ENCODE measurements at regions of chr4 and their contacts with region 1.

Region 1: GRCh38 chr4:140359562-140360427 is 13.7 kb upstream of the SCOC start:
- DNase-seq: peak; percentile 89
- ATAC-seq: peak; percentile 94
- H3K4me3 Mint-ChIP-seq: no peak overlapping the region
- H3K27ac Mint-ChIP-seq: no peak overlapping the region
- H3K4me1 Mint-ChIP-seq: no peaks in the 10 kb centered on the region
- H3K27me3 Mint-ChIP-seq: peaks cover 8% of the 10 kb centered on the region
- CTCF ChIP-seq: peak; percentile 82

Region 2: DNA sequence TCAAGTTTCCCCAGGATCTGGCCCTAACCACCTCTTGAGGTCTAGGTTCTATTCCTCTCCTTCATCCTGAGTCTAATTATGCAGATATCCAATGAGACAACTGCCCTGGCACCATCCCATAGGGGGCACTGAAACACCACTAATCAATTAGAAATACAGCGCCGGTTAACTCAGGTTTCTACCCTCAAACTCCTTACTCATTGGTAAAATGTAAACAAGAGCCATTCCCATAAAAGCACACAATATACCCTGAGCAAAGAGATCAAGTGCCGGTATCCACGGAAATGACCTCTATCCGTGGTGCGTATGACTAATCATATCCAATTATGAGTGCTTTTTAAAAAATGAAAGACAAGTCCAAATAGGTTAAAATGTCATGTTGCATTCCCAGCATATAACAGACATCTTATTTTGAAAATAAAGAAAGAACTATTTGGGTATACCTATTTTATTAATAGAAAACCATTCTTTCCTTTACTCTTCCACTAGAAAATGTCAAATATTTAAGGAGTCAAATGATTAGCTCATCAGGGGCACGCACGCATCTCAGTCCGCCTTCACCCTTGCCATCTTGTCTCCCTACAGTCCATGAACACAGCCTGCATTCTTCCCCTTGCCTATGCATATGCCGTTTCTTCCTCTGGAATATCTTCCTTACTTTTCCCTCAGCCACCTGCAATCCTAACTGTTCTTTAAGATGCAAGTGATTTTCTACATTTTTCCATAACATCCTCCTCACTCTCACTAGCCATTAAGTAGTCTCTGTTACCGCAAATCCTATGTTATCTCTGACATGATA is 346.9 kb before region 1 on chr4:
- CTCF ChIA-PET with region 1: interaction called, 28 read pairs
- POLR2A ChIA-PET with region 1: no interaction called
- DNase-seq: peak; percentile 60
- ATAC-seq: peak; percentile 99
- H3K4me3 Mint-ChIP-seq: no peak overlapping the region
- H3K27ac Mint-ChIP-seq: peak overlapping the region; percentile 28
- H3K4me1 Mint-ChIP-seq: peaks cover 13% of the 10 kb centered on the region
- H3K27me3 Mint-ChIP-seq: no peaks in the 10 kb centered on the region
- CTCF ChIP-seq: no peak; the same call in 1 of the 2 replicates

Region 3: DNA sequence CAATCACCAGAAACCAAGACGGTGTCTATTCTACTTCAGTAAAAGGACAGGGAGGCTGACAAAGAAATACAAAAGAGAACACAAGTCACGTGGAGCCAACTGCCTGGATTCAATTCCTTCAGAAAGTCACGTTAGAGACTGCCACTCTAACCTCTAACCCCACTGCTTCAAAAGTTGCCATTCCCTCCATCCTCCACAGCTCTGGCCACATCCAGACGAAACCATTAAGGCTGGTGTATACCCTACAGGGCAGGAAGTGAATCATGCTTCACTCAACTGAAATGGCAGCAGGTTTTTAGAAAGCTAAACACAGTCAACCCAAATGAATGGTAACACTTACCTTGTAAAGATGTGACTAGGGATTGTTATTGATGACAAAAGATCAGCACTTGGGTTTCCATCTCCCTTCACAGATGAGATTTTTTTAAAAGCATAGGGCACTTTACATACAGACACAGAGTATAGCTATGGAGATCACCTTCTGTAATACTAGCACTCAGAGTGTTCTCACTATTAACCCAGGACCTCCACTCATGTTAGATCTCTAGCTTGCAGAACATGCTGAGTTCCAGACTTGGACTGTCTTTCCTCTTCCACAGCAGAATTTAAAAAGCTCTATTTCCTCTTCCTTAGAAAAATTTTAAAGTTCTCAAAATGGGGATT is 243.2 kb before region 1 on chr4:
- CTCF ChIA-PET with region 1: no interaction called
- POLR2A ChIA-PET with region 1: no interaction called
- DNase-seq: no peak
- ATAC-seq: peak; percentile 91
- H3K4me3 Mint-ChIP-seq: no peak overlapping the region
- H3K27ac Mint-ChIP-seq: no peak overlapping the region
- H3K4me1 Mint-ChIP-seq: peaks cover 14% of the 10 kb centered on the region
- H3K27me3 Mint-ChIP-seq: no peaks in the 10 kb centered on the region
- CTCF ChIP-seq: no peak

Region 4: DNA sequence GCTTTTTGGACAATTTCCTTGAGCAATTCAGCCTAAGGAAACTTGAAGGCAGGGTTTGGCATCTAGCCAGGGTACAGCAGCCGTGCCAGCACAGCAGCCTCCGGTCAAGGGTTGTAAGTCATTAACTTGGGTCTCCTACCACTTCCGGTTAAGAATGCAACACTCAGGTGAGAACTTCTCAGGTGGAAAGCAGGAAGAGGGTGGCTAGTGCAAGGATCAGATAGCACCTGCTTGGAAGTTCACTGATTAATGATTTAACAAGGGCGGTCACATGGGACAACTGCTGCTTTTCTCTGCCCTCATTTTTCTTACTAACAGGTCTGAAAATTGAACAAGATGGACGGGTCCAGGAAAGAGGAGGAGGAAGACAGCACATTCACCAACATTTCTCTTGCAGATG is 16.5 kb before region 1 on chr4:
- CTCF ChIA-PET with region 1: interaction called, 21 read pairs
- POLR2A ChIA-PET with region 1: no interaction called
- DNase-seq: no peak
- ATAC-seq: no peak
- H3K4me3 Mint-ChIP-seq: no peak overlapping the region
- H3K27ac Mint-ChIP-seq: no peak overlapping the region
- H3K4me1 Mint-ChIP-seq: peaks cover 28% of the 10 kb centered on the region
- H3K27me3 Mint-ChIP-seq: no peaks in the 10 kb centered on the region
- CTCF ChIP-seq: no peak

Region 5: GRCh38 chr4:140382732-140383131 is 22.9 kb after region 1 on chr4:
- CTCF ChIA-PET with region 1: interaction called, 10 read pairs
- POLR2A ChIA-PET with region 1: no interaction called
- DNase-seq: no peak
- ATAC-seq: no peak
- H3K4me3 Mint-ChIP-seq: no peak overlapping the region
- H3K27ac Mint-ChIP-seq: 0 out of 2 replicates have a peak overlapping the region, but pooled peaks have one; percentile 20
- H3K4me1 Mint-ChIP-seq: 0 out of 2 replicates have a peak, but pooled peaks cover 2% of the 10 kb centered on the region
- H3K27me3 Mint-ChIP-seq: no peaks in the 10 kb centered on the region
- CTCF ChIP-seq: no peak

Region 6: DNA sequence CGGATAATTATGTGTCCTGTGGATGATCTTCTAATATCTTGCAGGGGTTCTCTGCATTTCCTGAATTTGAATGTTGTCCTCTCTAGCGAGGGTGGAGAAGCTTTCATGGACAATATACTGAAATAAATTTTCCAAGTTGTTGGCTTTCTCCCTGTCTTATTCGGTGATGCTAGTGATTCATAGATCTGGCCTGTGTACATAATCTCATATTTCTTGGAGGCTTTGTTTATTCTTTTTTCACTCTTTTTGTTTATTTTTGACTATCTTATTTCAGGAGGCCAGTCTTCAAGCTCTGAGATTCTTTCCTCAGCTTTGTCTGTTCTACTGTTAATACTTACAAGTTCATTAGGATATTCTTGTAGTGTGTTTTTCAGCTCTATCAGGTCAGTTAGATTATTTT is 88.4 kb after region 1 on chr4:
- CTCF ChIA-PET with region 1: interaction called, 16 read pairs
- POLR2A ChIA-PET with region 1: no interaction called
- DNase-seq: no peak
- ATAC-seq: no peak
- H3K4me3 Mint-ChIP-seq: no peak overlapping the region
- H3K27ac Mint-ChIP-seq: no peak overlapping the region
- H3K4me1 Mint-ChIP-seq: no peaks in the 10 kb centered on the region
- H3K27me3 Mint-ChIP-seq: no peaks in the 10 kb centered on the region
- CTCF ChIP-seq: no peak